MCF 10A (cell line): ENCODE measurements at regions of chr7 and their contacts with region 1.

Region 1: DNA sequence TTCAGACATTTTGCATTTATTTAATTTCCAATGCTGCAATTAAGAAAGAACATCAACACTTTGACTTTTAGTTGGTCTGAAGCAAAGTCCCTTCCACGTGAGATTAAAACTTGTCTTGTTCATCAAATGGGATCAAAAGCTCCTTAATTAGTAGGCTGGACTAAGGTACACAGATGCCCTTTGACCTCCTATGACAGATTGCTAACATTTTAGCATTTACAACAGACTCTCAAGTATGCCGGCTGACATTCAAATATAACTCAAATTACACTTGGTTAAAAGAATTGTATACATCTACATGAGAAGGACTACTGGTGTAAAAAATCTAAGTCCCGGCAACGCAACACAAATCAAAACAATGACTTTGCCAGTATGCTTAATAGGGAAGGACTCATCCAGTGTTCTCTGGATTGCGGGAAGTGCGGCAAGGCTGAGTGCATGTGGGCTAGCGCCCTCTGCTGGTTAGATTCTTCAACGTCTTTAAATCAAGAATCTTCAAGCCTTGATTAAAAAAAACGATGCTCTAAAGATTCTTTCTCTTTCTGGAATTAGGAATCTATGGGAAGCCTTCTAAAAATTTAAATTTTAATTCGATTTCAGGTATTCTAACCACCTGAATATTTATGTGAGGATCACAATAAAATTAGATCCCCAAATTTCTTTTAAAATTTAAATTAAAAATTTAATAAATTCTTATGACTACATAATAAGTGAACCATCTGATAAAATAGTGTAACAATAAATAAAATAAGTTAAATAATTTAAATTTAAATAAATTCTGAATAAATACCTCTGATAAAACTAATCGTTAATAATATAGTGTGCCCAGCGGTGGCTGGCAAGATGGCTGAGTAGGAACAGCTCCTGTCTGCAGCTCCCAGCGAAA is 444.7 kb downstream of the DGKB start:
- DNase-seq: peak; percentile 81
- H3K4me3 Mint-ChIP-seq: no peak overlapping the region
- H3K27ac Mint-ChIP-seq: no peak overlapping the region
- H3K4me1 Mint-ChIP-seq: no peaks in the 10 kb centered on the region
- H3K27me3 Mint-ChIP-seq: no peaks in the 10 kb centered on the region
- CTCF ChIP-seq: peak; percentile 76

Region 2: GRCh38 chr7:13476881-13477444 is 980.8 kb before region 1 on chr7:
- CTCF ChIA-PET with region 1: no interaction called
- POLR2A ChIA-PET with region 1: no interaction called
- intact Hi-C with region 1: loop called (anchors 1 kb)
- DNase-seq: peak; percentile 6
- H3K4me3 Mint-ChIP-seq: no peak overlapping the region
- H3K27ac Mint-ChIP-seq: no peak overlapping the region
- H3K4me1 Mint-ChIP-seq: no peaks in the 10 kb centered on the region
- H3K27me3 Mint-ChIP-seq: peaks cover 4% of the 10 kb centered on the region
- CTCF ChIP-seq: no peak

Region 3: GRCh38 chr7:13560441-13560840 is 897.4 kb before region 1 on chr7:
- CTCF ChIA-PET with region 1: no interaction called
- POLR2A ChIA-PET with region 1: no interaction called
- intact Hi-C with region 1: no loop called
- DNase-seq: no peak
- H3K4me3 Mint-ChIP-seq: no peak overlapping the region
- H3K27ac Mint-ChIP-seq: no peak overlapping the region
- H3K4me1 Mint-ChIP-seq: no peaks in the 10 kb centered on the region
- H3K27me3 Mint-ChIP-seq: peaks cover 62% of the 10 kb centered on the region
- CTCF ChIP-seq: no peak

Region 4: GRCh38 chr7:14424675-14425074 is 33.1 kb before region 1 on chr7:
- CTCF ChIA-PET with region 1: no interaction called
- POLR2A ChIA-PET with region 1: no interaction called
- intact Hi-C with region 1: no loop called
- DNase-seq: no peak
- H3K4me3 Mint-ChIP-seq: no peak overlapping the region
- H3K27ac Mint-ChIP-seq: no peak overlapping the region
- H3K4me1 Mint-ChIP-seq: no peaks in the 10 kb centered on the region
- H3K27me3 Mint-ChIP-seq: no peaks in the 10 kb centered on the region
- CTCF ChIP-seq: no peak